ENCODE measurements at regions of chr6 and their contacts with region 1.

Region 1: DNA sequence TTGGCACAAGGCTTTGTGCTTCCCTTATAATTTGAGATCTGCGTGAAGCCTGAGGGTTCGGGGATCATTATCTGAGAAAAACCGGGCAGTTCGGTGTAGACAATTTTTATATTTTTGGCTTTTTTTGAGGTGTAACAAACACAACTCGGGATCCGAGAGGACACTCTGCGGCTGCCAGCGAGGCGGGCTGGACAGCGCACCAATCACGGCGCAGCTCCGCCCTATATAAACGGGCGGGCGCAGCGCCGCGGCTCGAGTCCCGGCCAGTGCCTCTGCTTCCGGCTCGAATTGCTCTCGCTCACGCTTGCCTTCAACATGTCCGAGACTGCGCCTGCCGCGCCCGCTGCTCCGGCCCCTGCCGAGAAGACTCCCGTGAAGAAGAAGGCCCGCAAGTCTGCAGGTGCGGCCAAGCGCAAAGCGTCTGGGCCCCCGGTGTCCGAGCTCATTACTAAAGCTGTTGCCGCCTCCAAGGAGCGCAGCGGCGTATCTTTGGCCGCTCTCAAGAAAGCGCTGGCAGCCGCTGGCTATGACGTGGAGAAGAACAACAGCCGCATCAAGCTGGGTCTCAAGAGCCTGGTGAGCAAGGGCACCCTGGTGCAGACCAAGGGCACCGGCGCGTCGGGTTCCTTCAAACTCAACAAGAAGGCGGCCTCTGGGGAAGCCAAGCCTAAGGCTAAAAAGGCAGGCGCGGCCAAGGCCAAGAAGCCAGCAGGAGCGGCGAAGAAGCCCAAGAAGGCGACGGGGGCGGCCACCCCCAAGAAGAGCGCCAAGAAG is 69.0 kb downstream of the HFE start:
- DNase-seq: peak; percentile 97
- H3K4me3 Mint-ChIP-seq: peak overlapping the region; percentile 90
- H3K27ac Mint-ChIP-seq: peak overlapping the region; percentile 93
- H3K4me1 Mint-ChIP-seq: peaks cover 53% of the 10 kb centered on the region
- H3K27me3 Mint-ChIP-seq: peaks cover 11% of the 10 kb centered on the region

Region 2: GRCh38 chr6:26103770-26104456 is 52.4 kb before region 1 on chr6:
- intact Hi-C with region 1: loop called (anchors 1 kb)
- DNase-seq: peak; percentile 97
- H3K4me3 Mint-ChIP-seq: peak overlapping the region; percentile 85
- H3K27ac Mint-ChIP-seq: peak overlapping the region; percentile 94
- H3K4me1 Mint-ChIP-seq: peaks cover 19% of the 10 kb centered on the region
- H3K27me3 Mint-ChIP-seq: peaks cover 5% of the 10 kb centered on the region

Region 3: DNA sequence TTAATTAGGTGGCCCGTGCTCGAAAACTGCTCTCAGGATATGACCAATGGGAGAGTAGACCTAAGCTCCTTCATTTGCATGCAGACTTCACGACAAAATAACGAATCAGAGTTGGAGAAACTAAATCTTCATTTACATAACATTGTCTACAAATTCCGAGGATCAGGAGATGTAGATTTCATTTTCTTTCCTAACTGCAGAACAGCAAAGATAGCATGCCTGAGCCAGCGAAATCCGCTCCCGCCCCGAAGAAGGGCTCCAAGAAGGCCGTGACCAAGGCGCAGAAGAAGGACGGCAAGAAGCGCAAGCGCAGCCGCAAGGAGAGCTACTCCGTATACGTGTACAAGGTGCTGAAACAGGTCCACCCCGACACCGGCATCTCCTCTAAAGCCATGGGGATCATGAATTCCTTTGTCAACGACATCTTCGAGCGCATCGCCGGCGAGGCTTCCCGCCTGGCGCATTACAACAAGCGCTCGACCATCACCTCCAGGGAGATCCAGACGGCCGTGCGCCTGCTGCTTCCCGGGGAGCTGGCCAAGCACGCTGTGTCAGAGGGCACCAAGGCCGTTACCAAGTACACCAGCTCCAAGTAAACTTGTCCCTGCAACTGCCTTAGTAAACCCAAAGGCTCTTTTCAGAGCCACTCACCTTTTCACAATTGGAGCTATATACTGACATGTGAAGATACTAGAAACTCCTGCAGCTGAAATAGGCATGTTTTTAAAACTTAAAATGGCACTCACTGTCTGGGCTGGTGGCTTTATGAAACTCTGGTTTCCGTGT is 27.5 kb after region 1 on chr6:
- intact Hi-C with region 1: loop called (anchors 1 kb)
- DNase-seq: peak; percentile 92
- H3K4me3 Mint-ChIP-seq: peak overlapping the region; percentile 93
- H3K27ac Mint-ChIP-seq: peak overlapping the region; percentile 98
- H3K4me1 Mint-ChIP-seq: peaks cover 55% of the 10 kb centered on the region
- H3K27me3 Mint-ChIP-seq: no peaks in the 10 kb centered on the region

Region 4: DNA sequence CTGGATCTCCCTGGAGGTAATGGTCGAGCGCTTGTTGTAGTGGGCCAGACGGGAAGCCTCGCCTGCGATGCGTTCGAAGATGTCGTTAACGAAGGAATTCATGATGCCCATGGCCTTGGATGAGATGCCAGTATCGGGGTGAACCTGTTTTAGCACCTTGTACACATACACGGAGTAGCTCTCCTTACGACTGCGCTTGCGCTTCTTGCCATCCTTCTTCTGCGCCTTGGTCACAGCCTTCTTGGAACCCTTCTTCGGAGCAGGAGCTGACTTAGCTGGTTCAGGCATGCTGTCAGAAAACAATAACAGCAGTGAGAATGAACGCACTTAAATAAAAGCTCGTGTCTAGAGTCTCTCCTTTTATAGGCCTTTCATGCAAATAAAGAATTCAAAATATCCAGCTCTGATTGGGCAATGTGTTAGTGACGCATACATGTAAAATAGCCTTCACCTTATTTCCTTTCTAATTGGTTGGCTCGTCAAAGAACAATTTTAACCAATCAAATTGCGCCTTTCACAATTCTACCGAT is 60.2 kb after region 1 on chr6:
- intact Hi-C with region 1: loop called (anchors 1 kb)
- DNase-seq: peak; percentile 96
- H3K4me3 Mint-ChIP-seq: no peak overlapping the region
- H3K27ac Mint-ChIP-seq: no peak overlapping the region
- H3K4me1 Mint-ChIP-seq: peaks cover 27% of the 10 kb centered on the region
- H3K27me3 Mint-ChIP-seq: no peaks in the 10 kb centered on the region

Region 5: DNA sequence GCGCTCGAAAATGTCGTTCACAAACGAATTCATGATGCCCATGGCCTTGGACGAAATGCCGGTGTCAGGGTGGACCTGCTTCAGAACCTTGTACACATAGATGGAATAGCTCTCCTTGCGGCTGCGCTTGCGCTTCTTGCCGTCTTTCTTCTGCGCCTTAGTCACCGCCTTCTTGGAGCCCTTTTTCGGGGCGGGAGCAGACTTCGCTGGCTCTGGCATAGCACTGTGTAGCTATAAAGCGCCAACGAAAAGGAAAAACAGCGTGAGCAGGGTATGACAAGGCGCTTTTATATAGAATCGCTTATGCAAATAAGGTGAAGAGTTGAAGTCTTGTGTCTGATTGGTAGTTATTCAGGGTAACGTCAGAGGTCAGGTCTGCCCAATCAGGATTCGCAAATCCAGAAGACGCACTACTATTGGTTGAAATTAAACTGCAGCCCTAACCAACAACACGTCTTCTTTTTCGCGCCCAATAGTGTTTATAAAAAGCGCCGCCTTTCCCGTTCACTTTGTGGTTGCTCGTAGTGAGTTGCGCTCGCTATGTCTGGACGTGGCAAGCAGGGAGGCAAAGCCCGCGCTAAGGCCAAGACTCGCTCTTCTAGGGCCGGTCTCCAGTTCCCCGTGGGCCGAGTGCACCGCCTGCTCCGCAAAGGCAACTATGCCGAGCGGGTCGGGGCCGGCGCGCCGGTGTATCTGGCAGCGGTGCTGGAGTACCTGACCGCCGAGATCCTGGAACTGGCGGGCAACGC is 976.4 kb after region 1 on chr6:
- intact Hi-C with region 1: loop called (anchors 2 kb)
- DNase-seq: peak; percentile 98
- H3K4me3 Mint-ChIP-seq: no peak overlapping the region
- H3K27ac Mint-ChIP-seq: no peak overlapping the region
- H3K4me1 Mint-ChIP-seq: peaks cover 37% of the 10 kb centered on the region
- H3K27me3 Mint-ChIP-seq: no peaks in the 10 kb centered on the region

Measured in activated CD4-positive, alpha-beta T cell treated with anti-CD3 and anti-CD28 coated beads, Interleukin-2, amount 10 ng/mL, durations not matched to agents 24 days and 14 days (primary cell).